ENCODE measurements at regions of chr7 and their contacts with region 1.

Region 1: GRCh38 chr7:142469696-142470543 is 212.1 kb upstream of the PRSS58 start:
- DNase-seq: peak in 2 of 4 experiments; percentile 17 to 27
- ATAC-seq: no peak; the same call in 1 of the 3 replicates
- H3K4me3 ChIP-seq: no peak overlapping the region
- H3K27ac ChIP-seq: no peak overlapping the region
- H3K4me1 ChIP-seq: no peaks in the 10 kb centered on the region; a peak in 1 of 5 replicates
- H3K27me3 ChIP-seq: peaks cover 0 to 4% of the 10 kb centered on the region in 2 experiments; a peak in 4 of 5 replicates
- CTCF ChIP-seq: no peak
- EP300 ChIP-seq: no peak
- POLR2A ChIP-seq: no peak
- RAD21 ChIP-seq: no peak

Region 2: DNA sequence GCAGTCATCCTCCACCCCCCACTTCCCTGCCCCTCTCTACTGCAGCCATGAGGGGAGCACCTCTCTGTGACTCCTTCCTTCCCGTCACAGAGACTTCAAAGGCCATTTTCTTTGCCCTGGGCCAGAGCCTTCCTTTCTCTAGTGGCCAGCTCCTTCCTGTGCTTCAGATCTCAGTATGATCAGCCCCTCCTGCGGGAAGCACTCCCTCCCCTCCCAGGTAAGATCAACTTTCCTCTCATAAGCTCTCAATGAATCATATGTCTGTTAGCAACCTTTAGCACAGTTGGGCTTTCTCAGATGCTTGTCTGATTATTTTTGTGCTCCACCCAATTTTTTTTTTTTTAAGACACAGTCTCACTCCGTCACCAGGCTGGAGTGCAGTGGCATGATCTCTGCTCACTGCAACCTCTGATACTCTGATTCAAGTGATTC is 38.4 kb after region 1 on chr7:
- CTCF ChIA-PET with region 1: no interaction called
- POLR2A ChIA-PET with region 1: no interaction called
- in situ Hi-C with region 1: no loop called
- intact Hi-C with region 1: loop called (anchors 5 kb)
- DNase-seq: no peak
- ATAC-seq: no peak
- H3K4me3 ChIP-seq: no peak overlapping the region
- H3K27ac ChIP-seq: no peak overlapping the region
- H3K4me1 ChIP-seq: no peaks in the 10 kb centered on the region
- H3K27me3 ChIP-seq: peaks cover 0 to 3% of the 10 kb centered on the region in 2 experiments; a peak in 1 of 5 replicates
- CTCF ChIP-seq: no peak
- EP300 ChIP-seq: no peak
- POLR2A ChIP-seq: no peak
- RAD21 ChIP-seq: no peak